Transverse colon (tissue), 4 donors: ENCODE measurements at regions of chr6 and their contacts with region 1.

Region 1: DNA sequence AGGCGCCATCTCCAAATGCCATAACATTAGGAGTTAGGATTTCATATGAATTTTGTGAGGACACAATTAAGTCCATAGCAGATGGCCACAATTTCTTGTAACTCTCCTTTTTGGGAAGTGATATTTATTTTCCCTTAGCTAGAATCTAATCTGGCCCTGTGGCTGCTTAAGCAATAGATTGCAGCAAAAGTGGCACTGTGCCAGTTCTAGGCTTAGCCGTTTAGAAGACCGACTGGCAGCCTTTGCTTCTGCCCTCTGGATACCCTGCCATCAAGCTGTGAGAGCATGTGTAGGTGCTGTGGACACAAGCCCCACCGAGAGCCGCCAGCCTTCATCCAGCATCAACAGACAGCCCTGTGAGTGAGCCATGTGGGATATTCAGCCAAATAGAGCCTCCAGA is 15.9 kb upstream of the ADGB start:
- DNase-seq: peak; percentile 30
- H3K4me3 ChIP-seq: no peak overlapping the region
- H3K27ac ChIP-seq: no peak overlapping the region
- H3K4me1 ChIP-seq: no peaks in the 10 kb centered on the region
- H3K27me3 ChIP-seq: no peaks in the 10 kb centered on the region
- CTCF ChIP-seq: no peak
- EP300 ChIP-seq: no peak
- POLR2A ChIP-seq: no peak

Region 2: GRCh38 chr6:146543211-146543939 is 39.5 kb before region 1 on chr6 and contains the start of gene RAB32:
- in situ Hi-C with region 1: no loop called
- intact Hi-C with region 1: loop called (anchors 1 kb)
- DNase-seq: peak; percentile 93
- H3K4me3 ChIP-seq: peak within 1 kb of the TSS; percentile 64 to 89 (median 77)
- H3K27ac ChIP-seq: peak within 1 kb of the TSS; percentile 98 to 100 (median 99)
- H3K4me1 ChIP-seq: peaks cover 8 to 39% (median 24%) of the 10 kb centered on the region in 4 donors
- H3K27me3 ChIP-seq: no peaks in the 10 kb centered on the region
- CTCF ChIP-seq: peak; percentile 67 to 87 (median 79)
- EP300 ChIP-seq: peak; percentile 6
- POLR2A ChIP-seq: no peak
- total RNA-seq, gene RAB32: 3.7 to 43.4 (median 29.1) TPM

Region 3: DNA sequence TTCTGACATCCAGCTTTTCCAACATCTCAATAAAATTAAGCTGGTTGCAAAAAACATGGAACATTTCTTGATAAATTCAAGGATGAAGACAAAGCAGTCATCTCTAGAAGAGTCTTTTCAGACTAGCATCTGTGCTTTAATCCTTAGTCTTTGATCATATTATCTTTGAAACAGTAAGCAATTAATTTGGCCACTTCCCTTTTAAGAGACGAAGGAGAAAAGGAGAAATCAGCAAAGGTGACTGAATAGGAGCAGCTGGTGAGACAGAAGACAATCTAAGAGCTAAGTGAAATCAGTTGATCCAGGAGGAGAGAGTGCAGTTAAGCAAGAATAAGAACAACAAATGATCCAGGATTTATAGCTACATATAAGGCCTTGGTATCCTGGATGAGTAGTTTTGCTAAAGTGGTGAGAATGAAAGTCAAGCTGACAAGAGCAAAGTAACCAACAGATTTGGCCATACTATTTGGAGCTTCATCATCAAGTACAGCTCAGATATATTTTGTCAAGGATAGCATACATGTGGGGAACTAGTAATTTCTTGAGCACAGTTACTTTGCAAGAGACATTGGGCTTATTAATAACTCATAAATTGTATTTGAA is 231.4 kb after region 1 on chr6:
- in situ Hi-C with region 1: no loop called
- intact Hi-C with region 1: no loop called
- DNase-seq: no peak
- H3K4me3 ChIP-seq: no peak overlapping the region
- H3K27ac ChIP-seq: no peak overlapping the region
- H3K4me1 ChIP-seq: no peaks in the 10 kb centered on the region
- H3K27me3 ChIP-seq: no peaks in the 10 kb centered on the region
- CTCF ChIP-seq: no peak
- EP300 ChIP-seq: no peak
- POLR2A ChIP-seq: no peak